RWPE1 (cell line): ENCODE measurements at regions of chr15 and their contacts with region 1.

Region 1: DNA sequence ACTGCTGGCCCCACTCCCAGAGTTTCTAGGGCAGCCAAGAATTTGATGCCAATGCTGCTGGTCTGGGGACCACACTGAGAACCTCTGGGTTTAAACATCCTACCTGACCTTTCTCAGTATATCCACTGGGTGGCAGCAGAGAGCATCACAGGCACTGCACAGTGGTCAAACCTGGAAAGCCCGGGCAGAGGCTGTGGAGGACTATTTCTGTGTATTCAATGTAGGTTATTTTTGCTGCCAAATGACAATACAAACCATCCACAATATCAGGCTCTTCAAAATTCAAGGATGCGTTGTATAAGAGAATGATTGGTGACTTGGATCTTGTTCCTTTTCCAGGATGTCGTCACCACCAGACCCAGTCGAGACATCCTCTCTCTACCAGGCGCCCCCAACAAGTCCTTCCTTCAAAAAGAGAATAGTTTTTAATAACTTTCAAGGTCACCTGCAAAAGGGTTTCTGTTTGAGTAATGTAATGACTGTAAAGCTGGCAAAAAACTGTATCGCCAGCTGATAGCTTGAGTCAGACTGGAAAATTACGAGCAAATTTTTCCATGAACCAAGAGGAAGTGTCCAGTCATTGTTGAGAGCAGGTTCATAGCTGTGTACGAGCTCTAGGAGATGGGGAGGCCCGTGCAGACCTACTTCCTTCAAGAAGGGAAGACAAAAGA is 30.5 kb upstream of the MYZAP start:
- DNase-seq: peak; percentile 80
- H3K27ac ChIP-seq: peak overlapping the region; percentile 35; the same call in 1 of the 2 replicates
- CTCF ChIP-seq: peak; percentile 97

Region 2: GRCh38 chr15:57611938-57612337 is 50.8 kb after region 1 on chr15:
- CTCF ChIA-PET with region 1: interaction called, 61 read pairs
- POLR2A ChIA-PET with region 1: no interaction called
- DNase-seq: peak; percentile 79
- H3K27ac ChIP-seq: peak overlapping the region; percentile 74
- CTCF ChIP-seq: peak; percentile 82

Region 3: DNA sequence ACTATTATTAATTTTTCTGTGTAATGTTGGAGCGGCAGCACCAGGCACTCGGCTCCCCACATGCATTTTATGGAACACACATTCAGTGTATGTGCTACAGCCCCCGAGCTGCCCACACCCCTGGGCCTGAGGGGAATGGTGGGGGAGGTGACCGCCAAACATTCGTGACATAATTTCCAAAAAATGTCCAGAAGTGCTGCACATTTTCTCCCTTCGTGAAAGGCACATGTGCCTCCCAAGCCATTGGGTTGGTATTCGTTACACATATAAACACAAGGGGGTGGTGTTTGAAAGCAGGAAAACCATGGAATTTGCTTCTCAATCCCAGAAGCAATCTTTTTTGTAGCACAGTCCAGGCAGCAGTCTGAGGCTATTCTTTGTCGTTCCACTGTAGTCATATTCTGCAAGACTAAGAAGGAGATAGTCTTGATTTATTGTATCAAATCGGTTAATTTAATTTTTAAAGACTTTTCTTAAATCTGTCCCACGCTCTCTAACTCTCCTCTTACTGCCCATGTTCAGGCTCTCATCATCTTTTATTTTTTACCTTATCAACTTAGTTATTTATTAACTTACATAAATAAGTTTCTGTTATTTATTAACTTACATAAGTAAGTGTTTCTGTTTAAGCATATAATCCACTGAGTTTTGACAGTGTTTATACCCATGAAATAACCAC is 106.1 kb after region 1 on chr15:
- CTCF ChIA-PET with region 1: no interaction called
- POLR2A ChIA-PET with region 1: no interaction called
- DNase-seq: peak; percentile 53
- H3K27ac ChIP-seq: no peak overlapping the region
- CTCF ChIP-seq: peak; percentile 74